Adrenal gland (tissue), 19 donors: ENCODE measurements at regions of chr14 and their contacts with region 1.

Region 1: DNA sequence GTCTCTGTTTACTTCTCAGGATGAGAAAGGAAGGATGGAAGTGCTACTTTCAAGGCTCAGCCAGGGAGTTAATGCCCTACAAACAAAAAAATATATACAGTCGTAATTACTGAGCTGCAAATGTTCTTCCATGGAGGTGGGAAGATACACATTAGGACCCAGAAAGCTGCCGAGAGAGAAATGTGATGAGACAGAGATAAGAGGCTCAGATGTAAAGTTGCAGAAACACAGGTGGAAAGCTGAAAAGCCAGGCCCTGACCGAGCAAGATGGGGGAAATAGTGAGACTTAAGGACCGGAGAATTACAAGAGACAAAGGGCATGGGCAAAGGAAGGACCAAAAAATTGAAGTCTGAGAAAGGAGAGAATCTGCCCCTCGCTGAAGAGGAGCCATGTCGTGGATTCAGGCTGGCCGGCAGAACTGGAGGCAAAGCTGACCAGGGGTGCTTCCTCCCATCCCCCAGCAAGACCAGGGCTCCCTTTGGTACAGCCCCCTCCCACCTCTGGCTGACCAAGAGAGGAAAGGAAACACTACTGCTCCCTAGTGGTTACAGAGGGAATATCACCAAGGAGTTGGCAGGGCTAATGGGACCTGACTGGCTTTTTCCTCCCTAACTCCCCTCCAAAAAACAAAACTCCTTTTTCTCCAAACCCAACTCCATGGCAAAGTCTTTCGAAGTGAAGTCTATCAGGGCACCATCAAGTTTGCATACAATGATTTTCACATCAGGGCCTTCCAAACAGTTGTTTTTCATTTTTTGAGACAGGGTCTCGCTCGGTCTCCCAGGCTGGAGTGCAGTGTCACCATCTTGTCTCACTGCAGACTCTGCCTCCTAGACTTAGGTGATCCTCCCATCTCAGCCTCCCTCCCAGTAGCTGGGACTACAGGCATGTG is 12.1 kb downstream of the ZFHX2 start:
- DNase-seq: peak in 1 of 7 donors; percentile 31
- H3K4me3 ChIP-seq: no peak overlapping the region
- H3K27ac ChIP-seq: peak overlapping the region in 1 of 5 donors; percentile 30
- H3K4me1 ChIP-seq: peaks cover 0 to 9% of the 10 kb centered on the region in 2 donors
- H3K27me3 ChIP-seq: no peaks in the 10 kb centered on the region
- CTCF ChIP-seq: peak; percentile 53 to 76 (median 71)
- POLR2A ChIP-seq: no peak

Region 2: DNA sequence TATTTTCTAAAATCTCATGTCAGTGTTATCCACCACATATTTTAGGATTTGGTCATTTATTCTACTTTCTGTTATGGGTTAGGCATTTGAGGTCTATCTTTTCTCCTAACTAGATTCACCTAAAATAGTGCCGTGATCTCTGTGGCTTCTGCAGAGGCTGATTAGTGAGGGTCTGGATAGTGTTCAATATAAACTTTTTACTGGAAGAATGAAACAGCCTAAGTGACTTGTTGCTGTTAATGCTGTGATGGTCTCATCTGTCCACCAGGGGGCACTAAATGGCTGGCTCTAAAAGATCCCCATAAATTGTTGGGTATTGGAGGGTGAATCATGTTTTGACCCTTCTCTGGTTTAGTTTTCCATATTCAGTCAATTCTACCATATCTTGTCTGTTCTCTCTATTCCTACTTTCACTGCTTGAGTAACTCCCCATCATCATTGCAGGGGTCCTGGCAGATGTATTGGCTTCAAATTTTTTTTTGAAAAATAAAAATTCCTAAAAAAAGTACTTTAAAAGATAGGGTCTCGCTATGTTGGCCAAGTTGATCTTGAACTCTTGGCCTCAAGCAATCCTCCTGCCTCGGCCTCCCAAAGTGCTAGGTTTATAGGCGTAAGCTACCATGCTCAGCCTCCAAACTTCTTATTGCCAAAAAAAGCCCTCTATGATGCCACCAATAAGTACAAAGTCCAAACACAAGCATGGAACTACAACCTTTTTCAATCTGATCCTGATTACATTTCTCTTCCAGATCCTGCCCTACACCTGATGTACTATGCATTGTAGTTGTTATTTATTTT is 211.3 kb before region 1 on chr14:
- intact Hi-C with region 1: no loop called
- DNase-seq: peak; percentile 68 to 89 (median 78)
- H3K4me3 ChIP-seq: no peak overlapping the region
- H3K27ac ChIP-seq: no peak overlapping the region
- H3K4me1 ChIP-seq: peaks cover 2 to 10% of the 10 kb centered on the region in 2 donors
- H3K27me3 ChIP-seq: no peaks in the 10 kb centered on the region
- CTCF ChIP-seq: peak; percentile 79 to 91 (median 86)
- POLR2A ChIP-seq: no peak

Region 3: DNA sequence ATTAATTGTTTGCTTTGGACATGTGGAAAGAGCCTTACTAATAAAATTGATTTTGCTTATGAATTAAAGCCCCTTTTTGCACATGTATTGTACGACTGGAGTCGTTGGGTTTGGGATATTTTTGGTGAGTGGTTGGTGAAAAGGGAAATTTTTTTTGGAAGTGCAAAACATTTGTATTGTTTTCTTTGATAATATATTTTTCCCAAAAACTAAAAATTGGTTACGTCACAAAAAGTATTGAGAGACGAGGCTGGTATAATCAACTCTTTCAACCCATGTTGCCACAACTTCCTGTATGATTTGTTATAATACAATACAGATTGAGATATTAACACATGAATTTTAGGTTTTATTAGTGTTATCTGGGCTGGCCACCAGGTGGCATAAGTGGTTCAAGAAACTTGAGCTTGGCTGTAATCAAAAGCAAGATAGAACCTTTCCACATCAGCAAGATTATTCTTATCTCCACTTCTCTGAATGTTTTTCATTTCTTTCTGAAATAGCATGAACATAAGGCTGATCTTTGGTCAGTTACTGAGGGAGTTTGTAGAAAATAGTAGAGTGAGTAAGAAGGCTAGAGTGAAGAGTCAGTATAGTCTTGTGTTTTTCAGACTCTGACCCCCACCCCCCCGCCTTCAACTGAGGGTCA is 61.3 kb before region 1 on chr14:
- intact Hi-C with region 1: loop called in 1 of 2 experiments (anchors 5 kb)
- DNase-seq: peak; percentile 60 to 87 (median 69)
- H3K4me3 ChIP-seq: no peak overlapping the region
- H3K27ac ChIP-seq: no peak overlapping the region
- H3K4me1 ChIP-seq: no peaks in the 10 kb centered on the region
- H3K27me3 ChIP-seq: no peaks in the 10 kb centered on the region
- CTCF ChIP-seq: peak; percentile 62 to 88 (median 82)
- POLR2A ChIP-seq: no peak

Region 4: DNA sequence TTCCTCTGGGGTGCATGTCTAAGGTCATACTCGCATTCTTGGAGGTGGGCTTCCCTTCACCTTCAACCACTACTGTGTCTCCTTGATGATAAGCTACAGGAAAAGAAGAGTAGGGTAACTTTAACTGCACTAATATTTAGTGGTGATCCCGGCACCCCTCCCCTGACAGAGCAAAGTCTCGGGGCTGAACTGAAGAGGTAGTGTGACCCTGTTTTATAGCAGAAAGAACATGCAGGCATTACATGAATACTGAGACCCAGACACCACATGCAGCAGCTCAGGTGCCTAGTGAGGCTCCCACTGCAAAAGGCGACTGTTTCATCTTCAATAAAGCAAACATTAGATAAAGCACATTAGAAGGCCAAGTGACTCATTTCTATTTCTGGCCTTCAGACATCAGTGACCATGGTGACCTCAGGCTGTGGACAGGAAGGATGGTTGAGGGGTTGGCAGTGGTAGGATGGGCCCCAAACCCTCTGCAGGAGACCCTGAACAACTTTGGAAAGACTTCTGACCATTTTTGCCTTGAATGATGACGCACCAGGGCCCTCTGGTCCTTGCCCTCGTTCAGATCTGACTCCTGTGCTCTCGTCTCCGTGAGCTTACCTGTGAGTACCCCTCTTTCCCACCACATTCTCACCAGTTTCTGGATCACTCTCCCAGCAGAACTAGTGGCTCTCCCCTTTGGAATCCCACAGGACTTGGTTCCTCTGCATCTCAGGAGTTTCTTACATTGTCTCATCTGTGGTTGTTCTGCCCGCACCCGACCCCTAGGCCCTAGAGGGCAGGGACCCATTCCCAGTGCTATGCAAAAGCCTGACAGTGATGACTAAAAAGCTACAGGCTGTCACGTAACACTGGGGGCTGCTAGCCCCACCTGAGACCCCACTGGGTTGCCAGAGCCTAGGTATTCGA is 62.9 kb after region 1 on chr14:
- intact Hi-C with region 1: no loop called
- DNase-seq: peak in 5 of 7 donors; percentile 25 to 42 (median 32)
- H3K4me3 ChIP-seq: no peak overlapping the region
- H3K27ac ChIP-seq: no peak overlapping the region
- H3K4me1 ChIP-seq: peaks cover 0 to 12% of the 10 kb centered on the region in 2 donors
- H3K27me3 ChIP-seq: no peaks in the 10 kb centered on the region
- CTCF ChIP-seq: no peak
- POLR2A ChIP-seq: no peak